GM10248 (cell line): ENCODE measurements at regions of chr11 and their contacts with region 1.

Region 1: DNA sequence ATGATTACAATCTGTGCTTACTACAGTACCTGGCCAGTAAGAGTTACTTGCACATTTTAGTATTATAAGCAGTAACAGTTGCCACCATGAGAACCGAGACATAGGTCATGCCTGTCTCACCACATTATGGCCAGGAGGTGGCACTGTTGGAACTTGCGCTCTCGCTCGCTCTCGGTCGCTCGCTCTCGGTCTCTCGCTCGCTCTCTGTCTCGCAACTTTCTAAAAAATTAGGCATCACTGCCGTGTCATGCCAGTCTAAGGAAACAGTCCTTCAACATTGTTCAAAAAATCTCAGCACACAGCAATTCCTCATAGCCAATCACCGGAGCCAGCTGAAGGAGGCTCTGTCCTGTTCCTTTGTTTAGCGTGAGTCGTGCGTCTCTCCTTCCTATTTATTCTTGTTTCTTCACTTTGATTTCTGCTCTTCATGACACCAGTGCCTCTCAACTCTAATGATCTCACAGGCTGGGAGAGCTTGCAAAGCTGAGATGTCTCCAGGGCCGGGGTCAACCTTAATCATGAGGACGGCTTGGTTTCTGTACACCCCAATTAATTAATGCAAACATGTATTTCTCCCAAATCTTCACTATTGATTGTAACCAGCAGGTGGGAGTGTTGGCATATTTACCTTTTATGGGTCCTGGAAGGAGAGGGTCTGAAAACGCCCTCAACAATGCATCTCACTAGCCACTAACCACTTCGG is 6.3 kb upstream of the ADAMTS8 start:
- DNase-seq: peak; percentile 71
- CTCF ChIP-seq: peak; percentile 83

Region 2: DNA sequence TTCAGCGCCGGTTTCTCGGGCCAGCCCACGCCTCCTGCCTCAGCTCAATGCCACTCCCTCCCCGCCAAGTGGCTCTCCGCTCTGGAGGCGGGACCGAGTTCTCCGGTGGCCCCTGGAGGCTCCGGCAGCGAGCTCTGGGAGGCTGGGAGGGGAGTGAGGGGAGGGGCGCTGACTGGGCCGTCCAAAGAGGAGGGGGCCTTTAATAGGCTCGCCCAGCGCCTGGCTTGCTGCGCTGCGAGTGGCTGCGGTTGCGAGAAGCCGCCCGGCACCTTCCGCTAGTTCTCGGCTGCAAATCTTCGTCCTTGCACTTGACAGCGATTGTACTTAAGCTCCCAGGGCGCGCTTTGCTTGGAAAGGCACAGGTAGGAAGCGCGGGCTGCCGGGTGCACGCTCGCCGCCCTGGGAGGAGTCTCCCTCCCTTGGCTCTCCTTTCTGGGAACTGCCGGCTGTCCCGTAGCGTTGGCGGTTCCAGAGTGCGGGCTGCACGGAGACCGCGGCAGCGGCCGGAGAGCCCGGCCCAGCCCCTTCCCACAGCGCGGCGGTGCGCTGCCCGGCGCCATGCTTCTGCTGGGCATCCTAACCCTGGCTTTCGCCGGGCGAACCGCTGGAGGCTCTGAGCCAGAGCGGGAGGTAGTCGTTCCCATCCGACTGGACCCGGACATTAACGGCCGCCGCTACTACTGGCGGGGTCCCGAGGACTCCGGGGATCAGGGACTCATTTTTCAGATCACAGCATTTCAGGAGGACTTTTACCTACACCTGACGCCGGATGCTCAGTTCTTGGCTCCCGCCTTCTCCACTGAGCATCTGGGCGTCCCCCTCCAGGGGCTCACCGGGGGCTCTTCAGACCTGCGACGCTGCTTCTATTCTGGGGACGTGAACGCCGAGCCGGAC is 14.0 kb after region 1 on chr11 and contains the start of gene ADAMTS15:
- CTCF ChIA-PET with region 1: interaction called, 19 read pairs
- POLR2A ChIA-PET with region 1: no interaction called
- DNase-seq: peak; percentile 58
- CTCF ChIP-seq: no peak

Region 3: GRCh38 chr11:130499828-130500227 is 65.2 kb after region 1 on chr11:
- CTCF ChIA-PET with region 1: no interaction called
- POLR2A ChIA-PET with region 1: no interaction called
- DNase-seq: no peak
- CTCF ChIP-seq: no peak

Region 4: GRCh38 chr11:130852589-130852988 is 417.9 kb after region 1 on chr11:
- CTCF ChIA-PET with region 1: interaction called, 447 read pairs
- POLR2A ChIA-PET with region 1: no interaction called
- DNase-seq: no peak
- CTCF ChIP-seq: no peak

Region 5: DNA sequence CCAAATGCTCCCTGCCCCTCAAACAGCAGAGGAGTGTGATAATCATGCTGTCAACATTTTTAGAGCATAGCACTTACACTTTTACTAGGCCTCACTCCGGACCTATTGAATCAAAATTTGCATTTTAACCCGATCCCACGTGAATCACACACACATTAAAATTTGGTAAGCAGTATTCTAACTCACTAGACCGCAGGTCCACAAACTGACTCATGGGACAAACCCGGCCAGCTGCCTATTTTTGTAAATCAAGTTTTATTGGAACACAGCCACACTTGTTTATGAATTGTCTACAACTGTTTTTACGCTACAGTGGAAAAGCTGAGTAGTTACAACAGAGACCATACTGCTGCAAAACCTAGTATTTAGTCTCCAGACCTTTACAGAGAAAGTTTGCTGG is 438.3 kb after region 1 on chr11:
- CTCF ChIA-PET with region 1: interaction called, 447 read pairs
- POLR2A ChIA-PET with region 1: no interaction called
- DNase-seq: no peak
- CTCF ChIP-seq: no peak

Region 6: GRCh38 chr11:130894322-130895025 is 459.8 kb after region 1 on chr11:
- CTCF ChIA-PET with region 1: interaction called, 42 read pairs
- POLR2A ChIA-PET with region 1: no interaction called
- DNase-seq: peak; percentile 55
- CTCF ChIP-seq: peak; percentile 87